Activated naive CD8-positive, alpha-beta T cell treated with anti-CD3 and anti-CD28 coated beads, Interleukin-2, amount 10 ng/mL, durations not matched to agents 7 days and 5 days (primary cell): ENCODE measurements at regions of chr17 and their contacts with region 1.

Region 1: GRCh38 chr17:2336215-2336851 is at the start of gene TSR1:
- DNase-seq: peak; percentile 90
- ATAC-seq: peak; percentile 87
- H3K4me3 Mint-ChIP-seq: peak within 1 kb of the TSS; percentile 98
- H3K27ac Mint-ChIP-seq: peak within 1 kb of the TSS; percentile 91
- H3K4me1 Mint-ChIP-seq: peaks cover 17% of the 10 kb centered on the region
- H3K27me3 Mint-ChIP-seq: no peaks in the 10 kb centered on the region
- total RNA-seq, gene TSR1: 27.8 to 30.2 TPM

Region 2: DNA sequence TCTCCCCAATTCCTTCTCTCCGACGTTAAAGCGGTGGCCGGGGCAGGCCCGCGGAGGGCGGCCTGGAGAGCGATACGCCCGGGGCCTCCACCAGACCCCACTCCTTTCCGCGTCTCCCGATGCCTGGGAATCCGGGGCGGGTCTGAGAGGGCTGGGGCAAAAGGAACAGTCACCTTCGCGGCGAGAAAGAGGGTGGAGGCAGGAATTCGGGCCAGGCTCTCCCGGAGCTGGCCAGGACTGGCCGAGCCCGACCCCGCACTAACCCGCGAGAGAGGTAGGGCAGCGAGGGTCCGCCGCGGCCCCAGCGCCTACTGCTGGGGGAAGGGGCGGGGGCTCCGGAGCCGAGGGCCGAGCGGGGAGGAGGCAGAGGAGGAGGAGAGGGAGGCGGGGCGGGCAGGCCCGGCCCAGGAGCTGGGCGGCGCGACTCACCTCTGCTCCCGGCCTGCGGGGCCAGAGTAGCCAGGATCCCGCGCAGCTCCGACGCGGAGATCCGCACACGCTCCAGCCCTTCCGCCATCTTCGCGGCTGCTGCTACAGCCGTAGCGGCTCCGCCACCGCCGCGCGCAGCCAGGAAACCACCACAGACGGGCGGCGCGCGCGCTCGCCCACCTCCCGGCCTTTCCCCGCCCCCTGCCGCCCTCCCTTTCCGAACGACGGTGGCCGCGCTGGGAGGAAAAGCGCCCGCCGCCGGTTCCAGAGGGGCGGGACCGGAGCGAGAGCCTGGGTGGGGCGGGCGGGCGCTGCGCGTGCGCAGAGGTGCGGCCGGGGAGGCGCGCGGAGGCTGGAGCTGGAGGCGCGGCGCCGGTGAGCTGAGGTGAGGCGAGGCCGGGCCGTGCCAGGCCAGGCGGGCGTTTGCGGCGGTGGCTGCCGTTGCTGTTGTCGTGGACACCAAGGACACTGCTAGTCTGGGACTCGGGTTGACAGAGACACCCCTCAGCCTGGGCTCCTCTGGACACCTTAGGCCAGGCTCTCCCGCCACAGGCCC is 32.8 kb before region 1 on chr17 and contains the starts of genes SMG6 and SRR:
- POLR2A ChIA-PET with region 1: interaction called, 25 read pairs
- DNase-seq: peak; percentile 95
- ATAC-seq: peak; percentile 88
- H3K4me3 Mint-ChIP-seq: peak within 1 kb of the TSS; percentile 96
- H3K27ac Mint-ChIP-seq: peak within 1 kb of the TSS; percentile 81
- H3K4me1 Mint-ChIP-seq: peaks cover 32% of the 10 kb centered on the region
- H3K27me3 Mint-ChIP-seq: no peaks in the 10 kb centered on the region
- total RNA-seq, gene SMG6: 48.5 to 58.3 TPM
- total RNA-seq, gene SRR: 16.3 to 19.8 TPM

Region 3: GRCh38 chr17:2354311-2354710 is 18.0 kb after region 1 on chr17:
- POLR2A ChIA-PET with region 1: interaction called, 13 read pairs
- DNase-seq: no peak
- ATAC-seq: no peak
- H3K4me3 Mint-ChIP-seq: peak overlapping the region; percentile 10
- H3K27ac Mint-ChIP-seq: peak overlapping the region; percentile 94
- H3K4me1 Mint-ChIP-seq: peaks cover 11% of the 10 kb centered on the region
- H3K27me3 Mint-ChIP-seq: no peaks in the 10 kb centered on the region